Caco-2 (cell line): ENCODE measurements at regions of chr12 and their contacts with region 1.

Region 1: GRCh38 chr12:120104924-120105323 is 11.6 kb downstream of the RAB35 start:
- DNase-seq: peak; percentile 84 to 89
- H3K4me3 ChIP-seq: no peak overlapping the region
- H3K4me3 Mint-ChIP-seq: peak overlapping the region; percentile 55
- H3K27ac Mint-ChIP-seq: peak overlapping the region; percentile 97
- H3K4me1 ChIP-seq: peaks cover 29% of the 10 kb centered on the region
- H3K4me1 Mint-ChIP-seq: peaks cover 21% of the 10 kb centered on the region
- H3K27me3 ChIP-seq: no peaks in the 10 kb centered on the region
- H3K27me3 Mint-ChIP-seq: no peaks in the 10 kb centered on the region
- CTCF ChIP-seq: no peak

Region 2: GRCh38 chr12:120116792-120117651 is 12.1 kb after region 1 on chr12:
- CTCF ChIA-PET with region 1: interaction called, 4 read pairs
- POLR2A ChIA-PET with region 1: interaction called, 18 read pairs
- intact Hi-C with region 1: loop called (anchors 1 kb)
- DNase-seq: peak; percentile 96 to 99
- H3K4me3 ChIP-seq: peak overlapping the region; percentile 86
- H3K4me3 Mint-ChIP-seq: peak overlapping the region; percentile 84
- H3K27ac Mint-ChIP-seq: peak overlapping the region; percentile 92
- H3K4me1 ChIP-seq: peaks cover 26% of the 10 kb centered on the region
- H3K4me1 Mint-ChIP-seq: peaks cover 24% of the 10 kb centered on the region
- H3K27me3 ChIP-seq: no peaks in the 10 kb centered on the region
- H3K27me3 Mint-ChIP-seq: no peaks in the 10 kb centered on the region
- CTCF ChIP-seq: no peak